HepG2 (cell line): ENCODE measurements at regions of chr7 and their contacts with region 1.

Region 1: GRCh38 chr7:40371806-40372440 is 237.1 kb downstream of the SUGCT start:
- DNase-seq: no peak
- ATAC-seq: no peak
- H3K4me3 ChIP-seq: no peak overlapping the region
- H3K27ac ChIP-seq: no peak overlapping the region
- H3K4me1 ChIP-seq: peaks cover 12% of the 10 kb centered on the region
- H3K27me3 ChIP-seq: no peaks in the 10 kb centered on the region
- CTCF ChIP-seq: no peak
- EP300 ChIP-seq: no peak
- POLR2A ChIP-seq: no peak
- RAD21 ChIP-seq: no peak

Region 2: DNA sequence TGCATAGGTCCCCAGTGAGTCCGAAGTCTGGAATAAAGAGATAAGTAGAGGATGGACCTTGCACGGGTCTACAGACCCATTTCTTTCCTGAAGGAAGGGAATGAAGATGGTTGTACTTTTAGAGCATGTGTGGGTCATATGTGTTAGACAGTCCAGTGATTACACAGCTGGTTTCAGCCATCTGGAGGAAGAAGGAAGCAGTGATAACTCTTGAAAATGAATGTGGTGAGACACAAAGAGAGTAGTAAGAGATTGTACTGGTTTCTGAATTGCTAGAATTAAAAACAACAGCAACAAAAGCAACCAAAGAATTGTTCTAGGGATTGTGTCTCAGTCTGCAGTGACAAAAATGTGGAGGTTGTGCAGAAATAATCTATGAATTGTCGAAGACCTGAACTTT is 21.7 kb after region 1 on chr7:
- CTCF ChIA-PET with region 1: no interaction called
- POLR2A ChIA-PET with region 1: no interaction called
- in situ Hi-C with region 1: no loop called
- intact Hi-C with region 1: no loop called
- DNase-seq: no peak
- ATAC-seq: no peak
- H3K4me3 ChIP-seq: no peak overlapping the region
- H3K27ac ChIP-seq: no peak overlapping the region
- H3K4me1 ChIP-seq: no peaks in the 10 kb centered on the region
- H3K27me3 ChIP-seq: no peaks in the 10 kb centered on the region
- CTCF ChIP-seq: no peak
- EP300 ChIP-seq: no peak
- POLR2A ChIP-seq: no peak
- RAD21 ChIP-seq: no peak

Region 3: DNA sequence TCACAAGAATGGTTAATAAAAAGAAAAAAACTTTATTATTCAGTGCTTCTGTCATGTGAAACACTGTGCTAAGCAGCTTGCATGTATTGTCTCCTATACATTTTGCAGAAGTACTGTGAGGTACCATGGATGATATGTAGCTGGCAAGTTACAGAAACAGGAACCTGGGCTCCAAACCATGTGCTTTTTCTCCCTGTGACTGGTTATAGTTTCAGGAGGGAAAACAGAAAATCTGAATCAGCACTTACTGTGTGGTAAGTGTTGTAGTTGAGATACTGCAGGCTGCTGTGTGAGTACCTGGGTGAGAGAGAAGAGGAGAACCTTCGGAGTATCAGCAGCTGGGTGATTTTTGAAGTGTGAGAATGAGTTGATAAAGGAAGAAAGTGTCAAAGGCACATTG is 47.9 kb after region 1 on chr7:
- CTCF ChIA-PET with region 1: no interaction called
- POLR2A ChIA-PET with region 1: no interaction called
- in situ Hi-C with region 1: no loop called
- intact Hi-C with region 1: loop called (anchors 2 kb)
- DNase-seq: no peak
- ATAC-seq: no peak
- H3K4me3 ChIP-seq: no peak overlapping the region
- H3K27ac ChIP-seq: no peak overlapping the region
- H3K4me1 ChIP-seq: peaks cover 6% of the 10 kb centered on the region; the same call in 1 of the 2 replicates
- H3K27me3 ChIP-seq: no peaks in the 10 kb centered on the region
- CTCF ChIP-seq: no peak
- EP300 ChIP-seq: no peak
- POLR2A ChIP-seq: no peak
- RAD21 ChIP-seq: no peak